Transverse colon (tissue), 4 donors: ENCODE measurements at regions of chr5 and their contacts with region 1.

Region 1: DNA sequence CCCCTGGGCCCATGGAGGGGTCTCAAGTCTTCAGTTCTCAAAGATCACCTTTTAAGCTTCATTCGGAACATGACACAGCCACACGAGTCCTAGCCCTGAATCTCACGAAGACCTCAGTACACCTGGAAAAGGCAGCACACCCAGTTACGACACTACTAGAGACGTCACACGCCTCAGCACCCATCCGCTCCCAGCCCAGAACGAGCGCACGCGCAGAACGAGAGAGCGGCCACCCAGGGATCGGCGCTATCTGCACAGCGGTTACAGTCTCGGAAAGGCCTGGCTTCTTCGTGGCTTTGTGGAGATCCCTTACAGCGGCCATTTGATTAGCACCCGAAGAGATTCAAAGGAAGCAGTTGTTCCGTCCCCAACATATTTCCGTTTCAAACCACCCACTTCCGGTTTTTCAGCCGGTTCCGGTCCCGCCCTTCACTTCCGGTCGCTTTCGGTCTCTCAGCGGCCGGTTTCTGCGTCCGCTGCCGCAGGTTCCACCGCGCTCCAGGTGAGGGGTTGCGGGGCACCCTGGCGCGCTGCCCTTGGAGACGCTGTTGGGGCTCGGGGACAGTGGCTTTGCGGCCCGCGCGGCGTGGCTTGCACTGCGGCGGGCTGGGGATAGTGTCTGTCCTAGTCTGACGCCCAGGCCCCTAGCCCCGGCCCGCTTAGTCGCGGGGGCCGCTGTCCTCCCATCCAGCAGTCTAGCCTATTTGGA is at the start of gene UBLCP1:
- DNase-seq: peak; percentile 85
- H3K4me3 ChIP-seq: peak within 1 kb of the TSS; percentile 77 to 97 (median 92)
- H3K27ac ChIP-seq: peak within 1 kb of the TSS; percentile 86 to 93 (median 90)
- H3K4me1 ChIP-seq: peaks cover 5 to 22% (median 12%) of the 10 kb centered on the region in 4 donors
- H3K27me3 ChIP-seq: no peaks in the 10 kb centered on the region
- CTCF ChIP-seq: no peak
- EP300 ChIP-seq: no peak
- POLR2A ChIP-seq: peak; percentile 44
- total RNA-seq, gene UBLCP1: 2.2 to 15.2 (median 8.8) TPM

Region 2: GRCh38 chr5:159209438-159210305 is 53.3 kb before region 1 on chr5 and contains the start of gene RNF145:
- in situ Hi-C with region 1: no loop called
- intact Hi-C with region 1: loop called (anchors 5 kb)
- DNase-seq: peak; percentile 89
- H3K4me3 ChIP-seq: peak within 1 kb of the TSS; percentile 89 to 99 (median 98)
- H3K27ac ChIP-seq: peak within 1 kb of the TSS; percentile 96 to 99 (median 98)
- H3K4me1 ChIP-seq: peaks cover 17 to 56% (median 42%) of the 10 kb centered on the region in 4 donors
- H3K27me3 ChIP-seq: no peaks in the 10 kb centered on the region
- CTCF ChIP-seq: no peak
- EP300 ChIP-seq: no peak
- POLR2A ChIP-seq: peak; percentile 54
- total RNA-seq, gene RNF145: 11.5 to 59.4 (median 29.2) TPM